ENCODE measurements at regions of chr1 and their contacts with region 1.

Region 1: DNA sequence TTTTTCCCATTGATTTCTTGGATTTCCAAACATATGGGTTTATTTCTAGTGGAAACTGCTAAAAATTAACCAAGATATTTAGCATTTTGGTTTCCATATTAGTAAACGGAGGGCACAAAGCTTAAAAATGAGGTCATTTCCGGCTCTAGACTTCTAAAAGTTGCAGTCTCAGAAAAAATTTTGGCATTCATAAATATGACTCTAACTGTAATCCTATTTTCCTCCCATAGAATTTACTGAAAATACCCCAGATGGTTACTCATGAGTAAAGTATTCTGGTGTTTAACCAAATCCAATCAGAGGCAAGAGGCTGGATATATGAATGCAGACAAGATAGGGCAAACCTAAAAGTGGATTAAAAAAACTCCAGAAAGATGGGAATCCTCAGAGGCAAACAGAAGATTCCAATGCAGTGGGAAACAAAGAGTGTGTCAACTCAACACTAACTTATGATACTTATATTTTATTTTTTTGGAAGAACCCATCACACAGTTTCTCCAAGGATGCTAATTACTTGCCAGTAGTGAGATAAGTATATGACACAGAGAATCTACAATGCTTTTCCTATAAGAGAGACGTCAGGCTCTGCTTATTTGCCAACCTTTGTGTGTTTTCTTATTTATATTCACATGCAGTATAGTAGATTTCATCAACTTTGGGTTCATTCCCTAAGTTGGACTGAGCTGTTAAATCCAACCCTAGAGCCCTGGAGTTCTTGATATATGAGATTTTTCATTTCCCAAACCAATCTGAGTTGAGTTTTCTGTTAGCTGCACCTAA is 90.1 kb upstream of the BCL10 start:
- DNase-seq: no peak
- H3K4me3 ChIP-seq: no peak overlapping the region
- H3K27ac ChIP-seq: no peak overlapping the region
- H3K4me1 ChIP-seq: peaks cover 0 to 26% (median 7%) of the 10 kb centered on the region in 4 donors
- H3K27me3 ChIP-seq: no peaks in the 10 kb centered on the region
- CTCF ChIP-seq: no peak
- EP300 ChIP-seq: no peak
- POLR2A ChIP-seq: no peak

Region 2: DNA sequence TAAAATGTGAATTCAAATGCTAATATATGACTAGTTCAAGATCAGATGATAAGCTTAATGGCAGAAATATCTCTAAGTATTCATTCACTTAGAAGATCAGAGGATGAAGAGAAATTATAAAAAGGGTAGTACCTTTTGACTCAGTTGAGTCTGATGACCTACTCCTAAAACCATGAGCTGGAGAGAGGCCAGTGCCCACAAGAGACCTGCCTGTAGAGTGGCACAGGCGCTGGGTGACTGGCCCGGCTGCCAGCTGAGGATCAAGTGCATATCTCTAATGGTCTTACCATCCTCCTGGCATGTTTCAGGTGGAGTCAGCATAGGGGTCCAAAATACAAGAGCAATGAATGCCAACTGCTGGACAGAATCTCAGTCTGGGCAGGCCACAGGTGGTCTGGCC is 84.3 kb after region 1 on chr1:
- intact Hi-C with region 1: loop called (anchors 5 kb)
- DNase-seq: no peak
- H3K4me3 ChIP-seq: no peak overlapping the region
- H3K27ac ChIP-seq: no peak overlapping the region
- H3K4me1 ChIP-seq: peaks cover 0 to 35% (median 10%) of the 10 kb centered on the region in 4 donors
- H3K27me3 ChIP-seq: no peaks in the 10 kb centered on the region
- CTCF ChIP-seq: no peak
- EP300 ChIP-seq: no peak
- POLR2A ChIP-seq: no peak